Activated CD4-positive, alpha-beta T cell treated with anti-CD3 and anti-CD28 coated beads, Interleukin-2, amount 10 ng/mL, durations not matched to agents 24 days and 14 days (primary cell): ENCODE measurements at regions of chr19 and their contacts with region 1.

Region 1: GRCh38 chr19:43526884-43527859 is at the start of gene ETHE1:
- DNase-seq: peak; percentile 96
- H3K4me3 Mint-ChIP-seq: peak within 1 kb of the TSS; percentile 84
- H3K27ac Mint-ChIP-seq: peak within 1 kb of the TSS; percentile 97
- H3K4me1 Mint-ChIP-seq: peaks cover 26% of the 10 kb centered on the region
- H3K27me3 Mint-ChIP-seq: no peaks in the 10 kb centered on the region
- total RNA-seq, gene ETHE1: 59.3 and 59.7 TPM in 2 replicates

Region 2: GRCh38 chr19:43265664-43266025 is 261.5 kb before region 1 on chr19:
- intact Hi-C with region 1: no loop called
- DNase-seq: no peak
- H3K4me3 Mint-ChIP-seq: no peak overlapping the region
- H3K27ac Mint-ChIP-seq: no peak overlapping the region
- H3K4me1 Mint-ChIP-seq: no peaks in the 10 kb centered on the region
- H3K27me3 Mint-ChIP-seq: no peaks in the 10 kb centered on the region

Region 3: GRCh38 chr19:43362179-43362578 is 165.0 kb before region 1 on chr19:
- intact Hi-C with region 1: no loop called
- DNase-seq: no peak
- H3K4me3 Mint-ChIP-seq: no peak overlapping the region
- H3K27ac Mint-ChIP-seq: no peak overlapping the region
- H3K4me1 Mint-ChIP-seq: no peaks in the 10 kb centered on the region
- H3K27me3 Mint-ChIP-seq: no peaks in the 10 kb centered on the region

Region 4: DNA sequence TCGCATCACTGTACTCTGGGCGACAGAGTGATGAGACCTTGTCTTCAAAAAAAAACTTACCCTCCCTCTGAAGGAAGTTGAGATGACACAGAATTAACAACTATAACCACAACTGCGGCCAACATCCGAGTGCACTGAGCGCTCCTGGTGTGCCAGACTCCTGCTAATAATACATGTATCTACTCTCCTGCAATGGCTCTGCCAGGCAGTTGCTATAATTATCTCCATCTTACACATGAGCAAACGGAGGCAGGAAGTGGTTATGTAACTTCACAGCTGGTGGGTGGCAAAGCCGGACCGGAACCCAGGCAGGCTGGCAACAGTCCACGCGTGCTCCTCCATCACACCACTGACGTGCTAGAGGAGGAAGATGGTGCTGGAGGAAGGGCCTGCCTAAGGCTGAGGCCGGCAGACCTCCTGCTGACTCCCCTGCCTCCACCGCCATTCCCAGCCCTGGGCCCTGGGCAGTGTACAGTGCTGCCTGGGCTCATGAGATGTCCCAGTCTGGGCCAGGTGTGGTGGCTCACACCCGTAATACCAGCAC is 35.6 kb after region 1 on chr19:
- intact Hi-C with region 1: no loop called
- DNase-seq: peak; percentile 87
- H3K4me3 Mint-ChIP-seq: peak overlapping the region; percentile 55
- H3K27ac Mint-ChIP-seq: peak overlapping the region; percentile 91
- H3K4me1 Mint-ChIP-seq: peaks cover 31% of the 10 kb centered on the region
- H3K27me3 Mint-ChIP-seq: no peaks in the 10 kb centered on the region

Region 5: GRCh38 chr19:43784981-43785808 is 258.0 kb after region 1 on chr19:
- intact Hi-C with region 1: loop called (anchors 5 kb)
- DNase-seq: peak; percentile 89
- H3K4me3 Mint-ChIP-seq: peak overlapping the region; percentile 75
- H3K27ac Mint-ChIP-seq: peak overlapping the region; percentile 92
- H3K4me1 Mint-ChIP-seq: peaks cover 39% of the 10 kb centered on the region
- H3K27me3 Mint-ChIP-seq: peaks cover 4% of the 10 kb centered on the region